CD8-positive, alpha-beta T cell (primary cell): ENCODE measurements at regions of chr10 and their contacts with region 1.

Region 1: GRCh38 chr10:48656241-48656913 is 28.3 kb upstream of the WDFY4 start:
- DNase-seq: peak; percentile 64 to 88 (median 79)
- ATAC-seq: peak; percentile 92
- H3K4me3 ChIP-seq: peak overlapping the region; percentile 30 to 48
- H3K4me3 Mint-ChIP-seq: peak overlapping the region; percentile 79
- H3K27ac ChIP-seq: no peak overlapping the region
- H3K27ac Mint-ChIP-seq: no peak overlapping the region
- H3K4me1 ChIP-seq: peaks cover 12% of the 10 kb centered on the region
- H3K4me1 Mint-ChIP-seq: peaks cover 6% of the 10 kb centered on the region
- H3K27me3 ChIP-seq: peaks cover 0 to 9% of the 10 kb centered on the region in 2 experiments
- H3K27me3 Mint-ChIP-seq: peaks cover 30% of the 10 kb centered on the region
- CTCF ChIP-seq: peak; percentile 81

Region 2: GRCh38 chr10:48199580-48200377 is 456.6 kb before region 1 on chr10:
- CTCF ChIA-PET with region 1: no interaction called
- POLR2A ChIA-PET with region 1: no interaction called
- intact Hi-C with region 1: no loop called
- DNase-seq: no peak
- ATAC-seq: no peak
- H3K4me3 ChIP-seq: no peak overlapping the region
- H3K4me3 Mint-ChIP-seq: no peak overlapping the region
- H3K27ac ChIP-seq: no peak overlapping the region
- H3K27ac Mint-ChIP-seq: no peak overlapping the region
- H3K4me1 ChIP-seq: no peaks in the 10 kb centered on the region
- H3K4me1 Mint-ChIP-seq: no peaks in the 10 kb centered on the region
- H3K27me3 ChIP-seq: no peaks in the 10 kb centered on the region
- H3K27me3 Mint-ChIP-seq: no peaks in the 10 kb centered on the region
- CTCF ChIP-seq: no peak

Region 3: GRCh38 chr10:48306265-48306869 is 350.0 kb before region 1 on chr10 and contains the start of gene MAPK8:
- CTCF ChIA-PET with region 1: interaction called, 6 read pairs
- POLR2A ChIA-PET with region 1: no interaction called
- intact Hi-C with region 1: loop called in 1 of 2 experiments (anchors 5 kb)
- DNase-seq: peak; percentile 83 to 97 (median 91)
- ATAC-seq: peak; percentile 87
- H3K4me3 ChIP-seq: peak within 1 kb of the TSS; percentile 61 to 77
- H3K4me3 Mint-ChIP-seq: peak within 1 kb of the TSS; percentile 87
- H3K27ac ChIP-seq: peak within 1 kb of the TSS; percentile 75 to 77
- H3K27ac Mint-ChIP-seq: peak within 1 kb of the TSS; percentile 83
- H3K4me1 ChIP-seq: peaks cover 18% of the 10 kb centered on the region
- H3K4me1 Mint-ChIP-seq: peaks cover 27% of the 10 kb centered on the region
- H3K27me3 ChIP-seq: no peaks in the 10 kb centered on the region
- H3K27me3 Mint-ChIP-seq: no peaks in the 10 kb centered on the region
- CTCF ChIP-seq: no peak
- total RNA-seq, gene MAPK8: 50.1 to 54.7 TPM

Region 4: GRCh38 chr10:48523820-48524758 is 132.3 kb before region 1 on chr10:
- CTCF ChIA-PET with region 1: no interaction called
- POLR2A ChIA-PET with region 1: no interaction called
- intact Hi-C with region 1: no loop called
- DNase-seq: no peak
- ATAC-seq: no peak
- H3K4me3 ChIP-seq: no peak overlapping the region
- H3K4me3 Mint-ChIP-seq: no peak overlapping the region
- H3K27ac ChIP-seq: no peak overlapping the region
- H3K27ac Mint-ChIP-seq: no peak overlapping the region
- H3K4me1 ChIP-seq: no peaks in the 10 kb centered on the region
- H3K4me1 Mint-ChIP-seq: peaks cover 5% of the 10 kb centered on the region
- H3K27me3 ChIP-seq: peaks cover 0 to 7% of the 10 kb centered on the region in 2 experiments
- H3K27me3 Mint-ChIP-seq: peaks cover 48% of the 10 kb centered on the region
- CTCF ChIP-seq: no peak

Region 5: GRCh38 chr10:48608279-48608681 is 48.1 kb before region 1 on chr10:
- CTCF ChIA-PET with region 1: interaction called, 10 read pairs
- POLR2A ChIA-PET with region 1: no interaction called
- intact Hi-C with region 1: no loop called
- DNase-seq: peak in 3 of 9 experiments; percentile 33 to 49 (median 37)
- ATAC-seq: no peak
- H3K4me3 ChIP-seq: no peak overlapping the region
- H3K4me3 Mint-ChIP-seq: no peak overlapping the region
- H3K27ac ChIP-seq: no peak overlapping the region
- H3K27ac Mint-ChIP-seq: no peak overlapping the region
- H3K4me1 ChIP-seq: peaks cover 8% of the 10 kb centered on the region
- H3K4me1 Mint-ChIP-seq: peaks cover 4% of the 10 kb centered on the region
- H3K27me3 ChIP-seq: peaks cover 0 to 2% of the 10 kb centered on the region in 2 experiments
- H3K27me3 Mint-ChIP-seq: peaks cover 43% of the 10 kb centered on the region
- CTCF ChIP-seq: peak; percentile 43

Region 6: GRCh38 chr10:48670978-48671913 is 14.9 kb after region 1 on chr10:
- CTCF ChIA-PET with region 1: interaction called, 19 read pairs
- POLR2A ChIA-PET with region 1: no interaction called
- intact Hi-C with region 1: no loop called
- DNase-seq: peak in 1 of 9 experiments; percentile 31
- ATAC-seq: peak; percentile 26
- H3K4me3 ChIP-seq: no peak overlapping the region
- H3K4me3 Mint-ChIP-seq: no peak overlapping the region
- H3K27ac ChIP-seq: no peak overlapping the region
- H3K27ac Mint-ChIP-seq: peak overlapping the region; percentile 4
- H3K4me1 ChIP-seq: no peaks in the 10 kb centered on the region
- H3K4me1 Mint-ChIP-seq: no peaks in the 10 kb centered on the region
- H3K27me3 ChIP-seq: no peaks in the 10 kb centered on the region
- H3K27me3 Mint-ChIP-seq: peaks cover 2% of the 10 kb centered on the region
- CTCF ChIP-seq: no peak